ENCODE measurements at regions of chr15 and their contacts with region 1.

Region 1: DNA sequence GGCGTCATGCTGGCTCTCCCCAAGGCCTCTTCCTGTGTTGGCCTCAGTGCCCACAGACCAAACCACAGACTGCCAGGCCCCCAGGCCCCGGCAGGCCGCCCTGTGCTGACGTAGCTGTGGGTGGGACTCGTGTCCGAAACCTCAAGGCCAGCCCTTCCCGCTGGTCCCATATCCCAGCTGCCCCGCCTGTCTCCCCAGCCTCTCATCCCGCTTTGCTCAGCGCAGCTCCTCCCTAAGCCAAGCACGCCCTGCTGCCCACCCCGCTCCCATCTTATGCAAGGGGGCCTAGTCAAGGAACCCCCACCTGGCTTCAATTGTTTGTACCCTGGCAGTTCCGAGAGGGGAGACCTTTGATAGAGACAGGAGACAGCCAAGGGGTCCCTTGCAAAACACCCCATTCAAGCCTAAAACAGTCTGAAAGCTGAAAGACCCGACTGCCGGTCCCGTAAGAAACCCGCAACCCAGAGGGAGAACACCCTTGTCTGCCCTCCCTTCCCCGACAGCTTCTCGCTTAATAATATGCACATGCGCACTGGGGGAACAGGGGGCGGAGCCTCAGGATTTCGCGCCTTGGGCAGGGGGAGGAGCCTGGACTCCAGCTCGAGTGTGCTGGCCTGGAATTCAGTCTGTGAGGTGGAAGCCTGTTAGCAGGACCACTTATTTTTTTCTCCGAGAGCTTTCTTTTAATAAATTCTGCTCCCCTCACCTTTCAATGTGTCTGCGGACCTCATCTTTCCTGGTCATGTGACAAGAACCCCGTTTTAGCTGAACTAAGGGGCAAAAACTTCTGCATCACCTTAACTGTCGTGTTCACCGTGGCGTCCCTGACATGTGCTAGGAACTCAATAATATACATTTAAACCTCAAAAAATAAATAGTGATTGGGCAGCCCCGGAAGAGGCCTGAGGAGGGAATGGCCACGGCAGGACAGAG is 17.2 kb downstream of the TNFAIP8L3 start:
- DNase-seq: peak; percentile 66 to 89
- H3K4me3 ChIP-seq: peak overlapping the region in 3 of 4 experiments; percentile 6 to 49 (median 17); a peak in 5 of 8 replicates
- H3K27ac ChIP-seq: peak overlapping the region; percentile 13; the same call in 1 of the 2 replicates
- H3K4me1 ChIP-seq: peaks cover 0 to 9% (median 5%) of the 10 kb centered on the region in 4 experiments; a peak in 4 of 7 replicates
- H3K27me3 ChIP-seq: no peaks in the 10 kb centered on the region
- CTCF ChIP-seq: no peak
- EP300 ChIP-seq: no peak
- POLR2A ChIP-seq: peak; percentile 46 to 69
- RAD21 ChIP-seq: no peak

Region 2: GRCh38 chr15:51097553-51098330 is 20.3 kb after region 1 on chr15:
- CTCF ChIA-PET with region 1: no interaction called
- POLR2A ChIA-PET with region 1: interaction called, 10 read pairs
- DNase-seq: no peak
- H3K4me3 ChIP-seq: no peak overlapping the region
- H3K27ac ChIP-seq: no peak overlapping the region
- H3K4me1 ChIP-seq: peaks cover 0 to 3% (median 0%) of the 10 kb centered on the region in 4 experiments; a peak in 2 of 7 replicates
- H3K27me3 ChIP-seq: peaks cover 16 to 33% (median 31%) of the 10 kb centered on the region in 4 experiments
- CTCF ChIP-seq: no peak
- EP300 ChIP-seq: no peak
- POLR2A ChIP-seq: no peak
- RAD21 ChIP-seq: no peak

Measured in H1 (cell line).